Transverse colon (tissue), 4 donors: ENCODE measurements at regions of chr18 and their contacts with region 1.

Region 1: DNA sequence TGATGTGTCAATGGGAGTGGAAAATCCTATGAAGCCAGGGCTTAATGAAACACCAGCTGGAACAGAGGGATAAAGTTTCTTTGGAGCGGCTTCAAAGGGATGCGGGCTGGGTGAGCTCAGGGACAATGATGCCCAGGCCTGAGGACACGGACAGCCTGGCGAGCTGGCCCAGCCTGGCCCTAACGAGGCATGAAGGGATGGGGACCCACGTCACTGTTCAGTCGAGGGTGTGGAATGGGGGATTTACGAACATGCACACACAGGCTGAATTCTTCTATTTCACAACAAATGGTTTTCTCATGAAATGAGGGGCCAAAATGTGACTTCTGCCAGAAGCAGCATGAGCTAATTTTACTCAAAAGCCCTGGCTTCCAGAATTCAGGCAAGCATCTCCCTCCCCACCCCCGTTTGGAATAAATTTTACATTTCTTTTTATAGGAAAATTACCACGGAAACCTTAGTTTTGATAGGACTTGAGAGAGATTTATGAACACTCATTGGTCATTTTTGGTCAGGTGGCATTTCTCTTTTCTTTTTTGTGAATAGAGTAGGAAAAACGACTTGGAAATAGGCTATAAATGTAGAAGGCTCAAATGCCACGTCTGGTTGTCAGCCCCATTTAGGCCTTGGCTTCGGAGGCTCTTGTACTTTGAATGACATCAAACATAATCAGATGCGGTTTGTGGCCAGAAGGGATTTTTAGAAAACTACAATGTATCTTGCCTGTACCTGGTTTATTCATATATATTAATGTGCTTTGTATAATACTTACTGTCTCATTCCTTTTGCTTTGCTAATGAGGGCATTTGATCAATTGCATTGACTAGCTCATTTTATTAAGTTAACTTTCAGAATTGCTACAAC is 893.8 kb upstream of the CELF4 start:
- DNase-seq: no peak
- H3K4me3 ChIP-seq: no peak overlapping the region
- H3K27ac ChIP-seq: no peak overlapping the region
- H3K4me1 ChIP-seq: no peaks in the 10 kb centered on the region
- H3K27me3 ChIP-seq: no peaks in the 10 kb centered on the region
- CTCF ChIP-seq: no peak
- EP300 ChIP-seq: no peak
- POLR2A ChIP-seq: no peak

Region 2: GRCh38 chr18:36960038-36960437 is 1499.3 kb before region 1 on chr18:
- in situ Hi-C with region 1: no loop called
- intact Hi-C with region 1: loop called (anchors 5 kb)
- DNase-seq: no peak
- H3K4me3 ChIP-seq: no peak overlapping the region
- H3K27ac ChIP-seq: no peak overlapping the region
- H3K4me1 ChIP-seq: no peaks in the 10 kb centered on the region
- H3K27me3 ChIP-seq: no peaks in the 10 kb centered on the region
- CTCF ChIP-seq: no peak
- EP300 ChIP-seq: no peak
- POLR2A ChIP-seq: no peak